ENCODE measurements at regions of chr12 and their contacts with region 1.

Region 1: DNA sequence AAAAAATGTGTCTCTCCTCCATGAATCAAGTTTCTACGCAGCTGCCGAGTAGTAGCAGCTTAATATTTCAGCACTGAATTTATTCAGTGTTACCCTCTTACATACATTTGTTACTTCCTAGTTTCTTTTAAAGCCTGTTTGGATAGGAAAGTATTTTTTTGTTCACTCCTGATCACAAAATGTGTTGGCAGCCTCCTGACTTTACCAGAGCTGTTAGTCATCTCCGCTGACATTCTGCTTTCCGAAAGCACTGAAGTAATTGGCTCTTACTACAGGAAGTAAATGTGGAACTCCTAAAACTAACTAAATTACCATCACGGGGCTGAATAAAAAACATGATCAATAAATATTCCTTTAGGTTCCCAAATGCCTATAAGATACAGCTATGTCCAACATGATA is 225.5 kb downstream of the EPS8 start:
- DNase-seq: no peak
- H3K4me3 ChIP-seq: no peak overlapping the region
- H3K27ac ChIP-seq: no peak overlapping the region
- H3K4me1 ChIP-seq: peaks cover 6% of the 10 kb centered on the region
- CTCF ChIP-seq: no peak

Region 2: GRCh38 chr12:15446807-15447206 is 116.9 kb before region 1 on chr12:
- CTCF ChIA-PET with region 1: no interaction called
- POLR2A ChIA-PET with region 1: no interaction called
- intact Hi-C with region 1: no loop called
- DNase-seq: no peak
- H3K4me3 ChIP-seq: no peak overlapping the region
- H3K27ac ChIP-seq: no peak overlapping the region
- H3K4me1 ChIP-seq: no peaks in the 10 kb centered on the region
- CTCF ChIP-seq: no peak

Region 3: DNA sequence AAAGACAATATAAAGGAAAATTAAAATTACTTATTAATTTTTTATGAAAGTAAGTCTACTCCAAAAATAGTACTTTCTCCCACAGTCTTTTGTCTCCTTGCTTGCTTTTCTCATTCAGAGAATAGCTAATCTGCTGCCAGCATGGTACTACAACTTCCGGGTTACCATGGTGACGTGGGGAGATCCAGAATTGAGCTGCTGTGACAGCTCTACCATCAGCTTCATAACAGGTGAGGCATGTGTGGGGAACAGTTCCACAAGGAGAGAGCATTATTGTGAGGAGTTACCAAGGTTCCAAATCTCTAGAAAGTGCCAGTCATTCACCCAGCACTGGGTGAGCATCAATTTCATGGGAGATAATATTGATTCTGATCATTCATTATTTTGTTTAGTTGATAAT is 43.6 kb before region 1 on chr12:
- CTCF ChIA-PET with region 1: no interaction called
- POLR2A ChIA-PET with region 1: no interaction called
- intact Hi-C with region 1: no loop called
- DNase-seq: no peak
- H3K4me3 ChIP-seq: no peak overlapping the region
- H3K27ac ChIP-seq: no peak overlapping the region
- H3K4me1 ChIP-seq: no peaks in the 10 kb centered on the region
- CTCF ChIP-seq: no peak

Region 4: DNA sequence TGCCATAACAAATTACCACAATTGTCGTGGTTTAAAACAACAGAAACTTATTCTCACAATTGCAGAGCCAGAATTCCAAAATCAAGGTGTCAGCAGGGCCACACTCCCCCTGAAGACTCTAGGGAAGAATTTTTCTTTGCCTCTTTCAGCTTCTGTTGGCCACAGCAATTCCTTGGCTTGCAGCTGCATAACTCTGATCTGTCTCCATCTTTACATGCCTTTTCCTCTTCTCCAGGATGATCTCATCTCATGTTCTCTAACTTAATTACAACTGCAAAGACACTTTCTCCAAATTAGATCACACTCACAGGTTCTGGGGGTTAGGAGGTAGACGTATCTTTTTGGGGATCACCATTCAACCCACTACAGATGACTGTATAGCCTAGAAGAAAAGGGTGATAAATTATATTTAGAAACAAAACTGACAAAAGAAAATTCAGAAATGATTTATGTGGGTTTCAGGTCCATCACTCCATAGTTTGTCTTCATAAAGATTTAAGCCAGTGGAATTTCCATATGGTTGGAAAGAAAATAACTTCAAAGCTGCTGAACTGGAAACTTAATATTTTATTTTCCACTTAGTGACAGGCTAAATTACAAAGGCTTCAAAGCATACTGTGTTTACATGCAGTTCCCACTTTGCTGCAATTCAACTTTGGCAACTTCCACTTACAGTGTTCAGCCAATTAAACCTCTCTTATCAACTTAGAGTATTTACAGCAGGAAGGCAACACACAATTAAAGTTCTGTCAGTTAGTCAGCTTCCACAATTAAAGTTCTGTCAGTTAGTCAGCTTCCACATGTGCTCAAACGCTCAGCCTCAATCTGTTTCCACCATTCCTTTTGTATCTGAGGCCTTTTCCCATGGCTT is 12.2 kb after region 1 on chr12:
- CTCF ChIA-PET with region 1: no interaction called
- POLR2A ChIA-PET with region 1: interaction called, 37 read pairs
- intact Hi-C with region 1: no loop called
- DNase-seq: no peak
- H3K4me3 ChIP-seq: no peak overlapping the region
- H3K27ac ChIP-seq: no peak overlapping the region
- H3K4me1 ChIP-seq: peaks cover 10% of the 10 kb centered on the region
- CTCF ChIP-seq: no peak

Region 5: GRCh38 chr12:15599266-15600037 is 35.8 kb after region 1 on chr12:
- CTCF ChIA-PET with region 1: no interaction called
- POLR2A ChIA-PET with region 1: no interaction called
- intact Hi-C with region 1: no loop called
- DNase-seq: no peak
- H3K4me3 ChIP-seq: no peak overlapping the region
- H3K27ac ChIP-seq: no peak overlapping the region
- H3K4me1 ChIP-seq: no peaks in the 10 kb centered on the region
- CTCF ChIP-seq: no peak

Measured in OCI-LY7 (cell line).